GM23248 (cell line): ENCODE measurements at regions of chr14 and their contacts with region 1.

Region 1: GRCh38 chr14:75591331-75591946 is 13.0 kb downstream of the FLVCR2 start:
- DNase-seq: no peak
- H3K4me3 ChIP-seq: no peak overlapping the region
- H3K27ac ChIP-seq: no peak overlapping the region
- H3K4me1 ChIP-seq: no peaks in the 10 kb centered on the region
- H3K27me3 ChIP-seq: peaks cover 25% of the 10 kb centered on the region

Region 2: DNA sequence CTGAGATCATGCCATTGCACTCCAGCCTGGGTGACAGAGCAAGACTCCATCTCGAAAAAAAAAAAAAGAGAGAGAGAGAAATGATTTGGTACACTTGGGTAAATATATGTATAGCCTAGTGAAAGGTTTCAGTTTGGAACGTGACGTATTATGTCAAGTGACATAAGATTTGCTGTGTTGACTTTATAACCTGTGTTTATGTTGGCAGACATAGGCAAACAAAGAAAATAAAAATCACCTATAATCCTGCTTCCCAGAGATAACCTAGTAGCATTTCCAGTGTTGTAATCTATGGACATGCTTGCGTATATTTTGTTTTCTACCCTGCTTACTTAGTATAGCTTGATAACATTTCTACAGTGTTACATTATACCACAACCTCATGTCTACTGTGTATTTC is 52.5 kb after region 1 on chr14:
- in situ Hi-C with region 1: loop called (anchors 5 kb)
- DNase-seq: no peak
- H3K4me3 ChIP-seq: no peak overlapping the region
- H3K27ac ChIP-seq: no peak overlapping the region
- H3K4me1 ChIP-seq: peaks cover 24% of the 10 kb centered on the region
- H3K27me3 ChIP-seq: no peaks in the 10 kb centered on the region

Region 3: GRCh38 chr14:75960231-75960630 is 368.8 kb after region 1 on chr14:
- in situ Hi-C with region 1: no loop called
- DNase-seq: no peak
- H3K4me3 ChIP-seq: no peak overlapping the region
- H3K27ac ChIP-seq: no peak overlapping the region
- H3K4me1 ChIP-seq: no peaks in the 10 kb centered on the region
- H3K27me3 ChIP-seq: no peaks in the 10 kb centered on the region